ENCODE measurements at regions of chr10 and their contacts with region 1.

Region 1: DNA sequence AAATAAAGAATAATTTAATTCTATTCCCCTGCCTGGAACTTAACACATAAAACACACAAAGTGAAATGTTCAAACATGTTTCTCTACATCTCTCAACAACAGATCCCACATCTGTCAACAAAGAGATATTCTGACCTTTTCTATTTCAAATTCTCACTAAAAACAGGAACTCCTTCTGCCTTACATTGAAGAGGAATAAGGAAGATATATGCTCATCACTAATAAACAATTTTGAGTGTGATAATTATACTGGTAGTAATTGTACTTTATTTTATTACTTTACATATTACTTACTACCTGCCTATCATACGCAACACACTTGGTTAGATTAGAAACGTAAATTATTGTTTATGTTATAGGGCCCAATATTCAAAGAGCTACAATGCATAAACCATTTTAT is 13.4 kb downstream of the AKR1C2 start:
- DNase-seq: no peak
- ATAC-seq: no peak
- H3K4me3 ChIP-seq: no peak overlapping the region
- H3K27ac ChIP-seq: no peak overlapping the region
- H3K4me1 ChIP-seq: peaks cover 0 to 2% of the 10 kb centered on the region in 2 donors
- H3K27me3 ChIP-seq: no peaks in the 10 kb centered on the region
- CTCF ChIP-seq: no peak
- POLR2A ChIP-seq: no peak

Region 2: GRCh38 chr10:4926400-4926799 is 63.8 kb before region 1 on chr10:
- in situ Hi-C with region 1: no loop called
- intact Hi-C with region 1: no loop called
- DNase-seq: no peak
- ATAC-seq: no peak
- H3K4me3 ChIP-seq: no peak overlapping the region
- H3K27ac ChIP-seq: no peak overlapping the region
- H3K4me1 ChIP-seq: no peaks in the 10 kb centered on the region
- H3K27me3 ChIP-seq: no peaks in the 10 kb centered on the region
- CTCF ChIP-seq: no peak
- POLR2A ChIP-seq: no peak

Region 3: DNA sequence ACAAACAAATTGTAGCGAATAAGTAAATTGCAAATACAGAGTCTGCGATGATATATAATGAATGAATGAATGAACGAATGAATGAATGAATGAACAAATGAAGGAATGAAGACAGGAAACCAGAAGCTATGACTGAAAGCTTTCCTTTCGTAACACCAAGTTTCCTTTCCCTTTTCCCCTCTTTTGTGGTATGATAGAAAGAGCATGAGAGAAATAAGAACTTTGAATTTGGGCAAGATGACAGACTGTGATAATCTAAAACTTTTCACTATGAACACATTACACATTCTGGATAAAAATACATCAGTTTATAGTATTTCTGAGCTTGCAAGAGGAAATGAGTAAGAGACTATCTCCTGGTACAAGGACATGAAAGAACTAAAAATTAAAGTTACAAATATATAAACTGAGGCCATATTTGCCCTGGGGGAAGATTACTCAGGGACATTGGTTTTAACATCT is 366.1 kb after region 1 on chr10:
- in situ Hi-C with region 1: no loop called
- intact Hi-C with region 1: loop called (anchors 5 kb)
- DNase-seq: no peak
- ATAC-seq: no peak
- H3K4me3 ChIP-seq: no peak overlapping the region
- H3K27ac ChIP-seq: no peak overlapping the region
- H3K4me1 ChIP-seq: no peaks in the 10 kb centered on the region
- H3K27me3 ChIP-seq: peaks cover 0 to 13% (median 6%) of the 10 kb centered on the region in 3 donors
- CTCF ChIP-seq: no peak
- POLR2A ChIP-seq: no peak

Region 4: GRCh38 chr10:6833458-6834011 is 1843.3 kb after region 1 on chr10:
- in situ Hi-C with region 1: no loop called
- intact Hi-C with region 1: no loop called
- DNase-seq: no peak
- ATAC-seq: no peak
- H3K4me3 ChIP-seq: no peak overlapping the region
- H3K27ac ChIP-seq: no peak overlapping the region
- H3K4me1 ChIP-seq: no peaks in the 10 kb centered on the region
- H3K27me3 ChIP-seq: no peaks in the 10 kb centered on the region
- CTCF ChIP-seq: no peak
- POLR2A ChIP-seq: no peak